ENCODE measurements at regions of chr10 and their contacts with region 1.

Region 1: GRCh38 chr10:74118804-74119203 is 31.8 kb downstream of the AP3M1 start:
- DNase-seq: peak in 1 of 2 experiments; percentile 53
- H3K4me3 ChIP-seq: no peak overlapping the region
- H3K27ac ChIP-seq: peak overlapping the region; percentile 40
- H3K4me1 ChIP-seq: peaks cover 15% of the 10 kb centered on the region
- H3K27me3 ChIP-seq: no peaks in the 10 kb centered on the region
- CTCF ChIP-seq: no peak

Region 2: DNA sequence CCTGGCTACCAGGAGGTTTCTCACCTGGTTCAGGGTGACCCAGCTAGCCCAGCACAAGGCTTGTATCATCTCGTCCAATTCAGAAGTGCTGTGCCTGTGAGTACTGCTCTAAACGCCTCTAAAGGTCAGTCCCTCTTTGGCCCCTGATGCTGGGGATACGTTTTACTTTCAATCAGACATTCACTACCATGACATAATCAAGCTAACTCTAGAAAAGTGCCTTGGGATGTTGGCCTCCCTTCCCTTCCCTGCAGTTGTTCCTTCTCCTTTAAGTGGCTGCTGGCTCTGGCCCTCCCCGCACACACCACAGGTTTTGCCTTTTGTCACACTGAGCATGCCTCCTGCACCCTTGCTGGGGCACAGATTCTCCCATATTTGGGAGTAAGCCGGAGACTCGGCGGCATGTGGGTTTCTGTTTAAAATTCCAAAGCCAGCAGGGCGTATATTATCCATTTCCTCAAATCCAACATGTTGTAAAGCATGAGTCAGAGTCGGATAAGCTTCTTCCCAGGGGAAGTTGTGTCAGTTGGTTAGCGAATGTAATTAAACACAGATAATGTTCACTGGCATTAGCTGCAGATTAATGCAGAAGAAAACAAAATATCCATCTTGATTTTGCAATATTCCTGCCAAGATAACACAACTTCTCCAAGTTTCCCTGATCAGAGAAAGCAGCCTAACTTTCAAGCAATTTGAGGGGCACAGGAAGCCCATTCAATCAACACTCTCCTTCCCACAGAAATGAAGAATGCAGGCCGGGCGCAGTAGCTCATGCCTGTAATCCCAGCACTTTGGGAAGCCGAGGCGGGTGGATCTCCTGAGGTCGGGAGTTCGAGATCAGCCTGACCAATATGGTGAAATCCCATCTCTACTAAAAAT is 152.7 kb before region 1 on chr10:
- CTCF ChIA-PET with region 1: no interaction called
- POLR2A ChIA-PET with region 1: no interaction called
- intact Hi-C with region 1: no loop called
- DNase-seq: peak; percentile 93 to 99
- H3K4me3 ChIP-seq: peak overlapping the region; percentile 43; the same call in 1 of the 2 replicates
- H3K27ac ChIP-seq: peak overlapping the region; percentile 99
- H3K4me1 ChIP-seq: peaks cover 38% of the 10 kb centered on the region
- H3K27me3 ChIP-seq: no peaks in the 10 kb centered on the region
- CTCF ChIP-seq: no peak

Region 3: GRCh38 chr10:74371696-74372095 is 252.9 kb after region 1 on chr10:
- CTCF ChIA-PET with region 1: no interaction called
- POLR2A ChIA-PET with region 1: no interaction called
- intact Hi-C with region 1: no loop called
- DNase-seq: no peak
- H3K4me3 ChIP-seq: no peak overlapping the region
- H3K27ac ChIP-seq: no peak overlapping the region
- H3K4me1 ChIP-seq: no peaks in the 10 kb centered on the region
- H3K27me3 ChIP-seq: no peaks in the 10 kb centered on the region
- CTCF ChIP-seq: no peak

Region 4: DNA sequence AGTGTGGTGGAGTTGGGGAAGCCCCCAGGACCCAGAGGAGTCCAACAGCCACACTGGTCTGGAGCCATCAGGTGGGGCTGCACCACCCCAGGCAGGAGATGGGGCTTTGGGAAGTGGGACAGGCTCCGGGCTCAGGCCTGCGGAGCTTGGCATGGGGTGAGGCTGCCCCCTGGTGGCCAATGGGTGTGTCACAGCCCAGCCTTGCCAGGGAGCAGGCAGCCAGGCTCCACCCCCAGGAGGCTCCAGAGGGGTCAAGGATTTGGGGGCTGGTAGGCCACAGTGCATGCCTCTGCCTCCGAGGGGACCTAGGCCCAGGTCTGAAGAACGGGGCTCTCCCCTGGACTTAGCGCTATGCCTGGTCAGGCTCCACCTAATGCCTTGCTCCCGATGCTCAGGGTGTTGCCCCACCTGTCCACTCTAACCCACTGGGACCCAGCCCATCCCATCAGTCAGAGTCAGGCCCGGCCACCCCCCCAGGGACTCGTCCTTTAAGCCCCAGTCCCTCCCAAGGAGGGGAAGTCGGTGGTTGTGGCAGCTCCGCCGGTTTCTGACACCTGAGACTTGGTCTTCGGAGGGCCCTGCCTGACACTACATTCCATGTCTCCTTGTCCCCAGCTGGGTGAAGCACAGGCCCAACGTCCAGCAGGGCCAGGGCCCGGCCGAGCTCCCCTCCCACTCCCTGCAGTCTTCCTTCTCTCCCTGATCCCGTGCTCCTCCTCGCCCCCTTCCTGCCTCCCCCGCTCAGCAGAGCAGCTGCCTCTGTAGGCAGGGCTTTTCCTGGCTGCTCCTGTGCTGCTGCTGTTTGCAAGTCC is 981.4 kb after region 1 on chr10:
- CTCF ChIA-PET with region 1: no interaction called
- POLR2A ChIA-PET with region 1: no interaction called
- intact Hi-C with region 1: loop called (anchors 10 kb)
- DNase-seq: peak; percentile 52 to 84
- H3K4me3 ChIP-seq: no peak overlapping the region
- H3K27ac ChIP-seq: no peak overlapping the region
- H3K4me1 ChIP-seq: no peaks in the 10 kb centered on the region
- H3K27me3 ChIP-seq: no peaks in the 10 kb centered on the region
- CTCF ChIP-seq: peak; percentile 94

Region 5: GRCh38 chr10:75547391-75548298 is 1428.8 kb after region 1 on chr10:
- CTCF ChIA-PET with region 1: no interaction called
- POLR2A ChIA-PET with region 1: no interaction called
- intact Hi-C with region 1: no loop called
- DNase-seq: peak in 1 of 2 experiments; percentile 48
- H3K4me3 ChIP-seq: no peak overlapping the region
- H3K27ac ChIP-seq: no peak overlapping the region
- H3K4me1 ChIP-seq: peaks cover 5% of the 10 kb centered on the region; the same call in 1 of the 2 replicates
- H3K27me3 ChIP-seq: no peaks in the 10 kb centered on the region
- CTCF ChIP-seq: no peak